ENCODE measurements at regions of chr22 and their contacts with region 1.

Region 1: GRCh38 chr22:46674367-46674781 is 54.2 kb downstream of the GRAMD4 start:
- DNase-seq: peak; percentile 73
- ATAC-seq: peak; percentile 81
- H3K4me3 Mint-ChIP-seq: peak overlapping the region; percentile 76
- H3K27ac Mint-ChIP-seq: peak overlapping the region; percentile 77
- H3K4me1 Mint-ChIP-seq: peaks cover 34% of the 10 kb centered on the region
- H3K27me3 Mint-ChIP-seq: no peaks in the 10 kb centered on the region
- CTCF ChIP-seq: no peak

Region 2: DNA sequence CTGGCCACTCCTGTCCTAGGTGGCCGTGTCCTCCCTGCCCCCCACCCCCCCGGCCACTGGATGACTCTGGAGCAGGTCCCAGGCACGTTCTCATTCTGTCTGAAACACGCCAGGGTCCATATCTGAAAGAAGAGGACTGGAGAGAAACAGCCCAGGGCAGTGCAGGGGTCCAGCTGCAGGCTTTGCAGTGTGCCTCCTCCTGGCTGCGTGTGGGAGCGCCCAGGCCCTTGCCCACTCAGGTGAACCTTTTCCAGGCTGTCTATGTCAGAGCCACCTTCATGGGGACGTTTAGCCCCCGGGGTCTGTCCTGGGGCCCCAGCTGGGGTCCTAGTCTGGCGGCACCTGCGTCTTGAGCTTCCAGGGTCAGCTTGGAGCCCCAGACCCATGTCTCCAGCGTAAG is 38.6 kb before region 1 on chr22:
- CTCF ChIA-PET with region 1: no interaction called
- POLR2A ChIA-PET with region 1: no interaction called
- intact Hi-C with region 1: loop called (anchors 5 kb)
- DNase-seq: no peak
- ATAC-seq: peak; percentile 34
- H3K4me3 Mint-ChIP-seq: no peak overlapping the region
- H3K27ac Mint-ChIP-seq: no peak overlapping the region
- H3K4me1 Mint-ChIP-seq: no peaks in the 10 kb centered on the region
- H3K27me3 Mint-ChIP-seq: no peaks in the 10 kb centered on the region
- CTCF ChIP-seq: no peak